ENCODE measurements at regions of chr1 and their contacts with region 1.

Region 1: DNA sequence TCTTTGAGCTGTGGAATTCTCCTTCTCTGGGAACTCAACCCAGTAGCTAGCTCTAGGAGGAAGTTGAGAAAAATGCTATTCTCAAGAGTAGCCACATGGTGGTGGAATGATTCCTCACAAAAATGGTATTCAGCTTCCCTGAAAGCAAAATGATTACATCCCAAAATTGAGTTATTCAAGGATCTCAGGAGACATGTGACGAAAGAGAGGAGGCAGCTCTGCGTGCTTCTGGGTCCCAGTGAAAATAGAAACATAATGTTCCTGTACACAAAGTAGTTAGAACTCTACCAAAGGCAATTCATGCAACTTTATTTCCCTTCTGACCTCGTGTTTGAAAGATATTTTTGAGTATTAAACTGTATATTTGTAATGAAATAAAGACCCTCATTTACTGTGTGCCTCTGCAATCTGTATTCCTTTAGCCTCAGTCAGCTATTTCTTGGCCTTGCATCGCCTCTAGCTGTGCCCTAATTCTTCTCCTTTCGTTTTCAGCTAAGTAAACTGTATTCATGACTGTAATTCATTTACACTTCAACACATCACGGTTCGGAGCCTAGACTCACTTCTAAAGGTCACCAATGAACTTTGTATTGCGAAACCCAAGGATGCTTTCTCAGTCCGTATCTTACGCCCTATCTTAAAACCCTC is 167.3 kb downstream of the FASLG start:
- DNase-seq: peak; percentile 41
- H3K4me3 Mint-ChIP-seq: no peak overlapping the region
- H3K27ac Mint-ChIP-seq: no peak overlapping the region
- H3K4me1 Mint-ChIP-seq: peaks cover 6% of the 10 kb centered on the region
- H3K27me3 Mint-ChIP-seq: no peaks in the 10 kb centered on the region
- CTCF ChIP-seq: peak; percentile 65

Region 2: GRCh38 chr1:172895050-172895460 is 68.8 kb after region 1 on chr1:
- CTCF ChIA-PET with region 1: interaction called, 3 read pairs
- intact Hi-C with region 1: loop called (anchors 5 kb)
- DNase-seq: no peak
- H3K4me3 Mint-ChIP-seq: peak overlapping the region; percentile 11
- H3K27ac Mint-ChIP-seq: peak overlapping the region; percentile 12
- H3K4me1 Mint-ChIP-seq: peaks cover 58% of the 10 kb centered on the region
- H3K27me3 Mint-ChIP-seq: no peaks in the 10 kb centered on the region
- CTCF ChIP-seq: no peak

Region 3: GRCh38 chr1:172955161-172955815 is 129.1 kb after region 1 on chr1:
- CTCF ChIA-PET with region 1: no interaction called
- intact Hi-C with region 1: no loop called
- DNase-seq: no peak
- H3K4me3 Mint-ChIP-seq: no peak overlapping the region
- H3K27ac Mint-ChIP-seq: no peak overlapping the region
- H3K4me1 Mint-ChIP-seq: peaks cover 20% of the 10 kb centered on the region
- H3K27me3 Mint-ChIP-seq: no peaks in the 10 kb centered on the region
- CTCF ChIP-seq: no peak

Region 4: DNA sequence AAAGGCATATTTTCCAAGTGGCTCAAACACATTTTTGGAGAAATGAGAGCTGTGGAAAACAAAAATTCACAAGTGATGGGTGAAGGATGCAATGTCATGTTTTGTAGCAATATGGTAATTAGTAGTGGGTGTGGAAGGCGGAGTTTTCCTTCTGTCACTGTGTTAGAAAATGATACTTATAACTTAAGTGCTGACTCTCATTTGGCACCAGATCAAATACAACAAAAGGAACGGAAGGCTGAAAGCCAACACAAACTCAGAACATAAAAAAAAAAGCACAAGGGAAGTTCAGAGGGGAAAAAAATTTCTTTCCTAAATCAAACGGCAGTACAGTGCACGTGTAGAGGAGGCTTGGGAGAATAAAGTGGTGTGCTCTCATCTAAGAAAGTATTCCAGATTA is 224.6 kb after region 1 on chr1 and contains the start of gene TNFSF18:
- CTCF ChIA-PET with region 1: no interaction called
- intact Hi-C with region 1: loop called (anchors 5 kb)
- DNase-seq: no peak
- H3K4me3 Mint-ChIP-seq: no peak within 1 kb of the TSS
- H3K27ac Mint-ChIP-seq: peak within 1 kb of the TSS; percentile 59
- H3K4me1 Mint-ChIP-seq: peaks cover 54% of the 10 kb centered on the region
- H3K27me3 Mint-ChIP-seq: no peaks in the 10 kb centered on the region
- CTCF ChIP-seq: no peak
- total RNA-seq, gene TNFSF18: not detected in 2 replicates

Region 5: GRCh38 chr1:173202430-173203145 is 376.4 kb after region 1 on chr1:
- CTCF ChIA-PET with region 1: interaction called, 93 read pairs
- intact Hi-C with region 1: loop called (anchors 1 kb)
- DNase-seq: peak; percentile 61
- H3K4me3 Mint-ChIP-seq: no peak overlapping the region
- H3K27ac Mint-ChIP-seq: no peak overlapping the region
- H3K4me1 Mint-ChIP-seq: peaks cover 19% of the 10 kb centered on the region
- H3K27me3 Mint-ChIP-seq: no peaks in the 10 kb centered on the region
- CTCF ChIP-seq: peak; percentile 72